ENCODE measurements at regions of chrX and their contacts with region 1.

Region 1: DNA sequence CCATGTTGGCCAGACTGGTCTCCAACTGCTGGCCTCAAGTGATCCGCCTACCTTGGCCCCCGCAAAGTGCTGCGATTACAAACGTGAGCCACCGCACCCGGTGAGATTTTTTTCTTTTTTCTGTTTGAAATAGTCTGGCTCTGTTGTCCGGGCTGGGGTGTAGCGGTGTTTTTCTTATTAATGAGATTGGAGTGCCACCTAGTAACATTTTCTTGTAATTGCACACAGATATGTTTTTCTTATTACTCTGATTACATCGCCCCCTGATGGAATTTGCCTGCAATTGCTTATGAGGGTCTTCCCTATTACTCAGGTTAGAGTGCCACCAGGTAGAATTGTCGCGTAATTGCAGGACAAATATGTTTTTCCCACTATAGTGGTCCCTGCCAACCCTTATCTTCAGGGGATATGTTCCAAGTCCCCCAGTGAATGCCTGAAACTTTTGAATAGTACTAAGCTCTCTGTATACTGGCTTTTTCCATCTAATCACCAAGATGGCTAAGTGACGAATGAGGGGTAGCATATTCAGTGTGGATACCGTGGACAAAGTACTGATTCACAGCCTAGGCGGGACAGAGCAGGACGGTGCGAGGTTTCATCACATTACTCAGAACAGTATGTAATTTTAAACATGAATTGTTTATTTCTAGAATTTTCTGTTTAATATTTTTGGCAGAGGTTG is 8.6 kb upstream of the PDHA1 start:
- DNase-seq: no peak
- ATAC-seq: peak; percentile 65
- H3K4me3 ChIP-seq: no peak overlapping the region
- H3K27ac ChIP-seq: no peak overlapping the region
- H3K4me1 ChIP-seq: no peaks in the 10 kb centered on the region
- H3K27me3 ChIP-seq: no peaks in the 10 kb centered on the region
- CTCF ChIP-seq: peak in 1 of 2 donors; percentile 37

Region 2: DNA sequence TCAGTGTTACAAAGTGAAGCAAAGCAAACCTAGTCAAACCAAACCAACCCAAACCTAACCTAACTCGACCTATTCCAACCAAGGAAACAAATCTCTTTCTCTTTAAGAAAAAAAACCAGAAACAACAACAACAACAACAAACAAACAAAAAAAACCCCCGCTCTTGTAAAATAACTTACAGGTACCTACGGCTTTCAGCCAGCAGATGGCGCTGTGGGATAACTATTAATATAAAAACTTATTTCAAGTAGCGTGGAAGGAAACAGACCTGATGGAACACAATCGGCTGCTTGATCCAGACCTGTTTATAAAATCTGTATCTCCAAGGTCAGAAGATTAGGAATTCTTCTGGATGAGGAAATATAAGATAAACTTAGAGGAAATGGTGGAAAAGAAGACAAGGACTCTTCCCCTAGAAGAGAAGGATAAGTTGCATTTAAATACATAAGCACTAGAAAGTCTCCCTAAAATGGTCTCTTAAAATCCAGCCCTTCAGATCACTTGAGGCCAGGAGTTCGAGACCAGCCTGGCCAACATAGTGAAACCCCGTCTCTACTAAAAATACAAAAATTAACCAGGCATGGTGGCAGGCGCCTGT is 944.0 kb before region 1 on chrX:
- intact Hi-C with region 1: loop called in 1 of 2 experiments (anchors 10 kb)
- DNase-seq: peak in 3 of 4 donors; percentile 52 to 68 (median 59)
- ATAC-seq: peak; percentile 82
- H3K4me3 ChIP-seq: no peak overlapping the region
- H3K27ac ChIP-seq: no peak overlapping the region
- H3K4me1 ChIP-seq: no peaks in the 10 kb centered on the region
- H3K27me3 ChIP-seq: no peaks in the 10 kb centered on the region
- CTCF ChIP-seq: peak; percentile 58 to 83

Region 3: DNA sequence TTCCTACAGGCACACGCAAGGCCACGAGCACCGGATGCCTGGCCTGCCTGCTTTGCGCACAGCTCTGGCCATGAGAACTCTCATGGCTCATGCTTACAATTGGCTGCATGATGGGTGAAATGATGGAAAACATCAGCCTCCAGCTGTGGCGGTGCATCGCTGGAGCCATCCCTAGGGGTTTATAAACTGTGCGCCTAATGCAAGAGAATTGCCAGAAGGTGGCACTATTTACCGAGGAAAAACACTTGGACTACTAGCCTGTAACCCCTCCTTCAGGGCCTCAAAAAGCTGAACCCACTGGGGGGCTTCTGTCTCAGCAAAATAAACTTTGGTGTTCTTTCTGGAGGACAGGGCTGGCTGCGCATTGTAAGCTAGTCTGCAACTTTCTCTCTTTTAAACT is 403.1 kb before region 1 on chrX:
- intact Hi-C with region 1: loop called in 1 of 2 experiments (anchors 10 kb)
- DNase-seq: peak in 1 of 4 donors; percentile 19
- ATAC-seq: no peak
- H3K4me3 ChIP-seq: no peak overlapping the region
- H3K27ac ChIP-seq: no peak overlapping the region
- H3K4me1 ChIP-seq: no peaks in the 10 kb centered on the region
- H3K27me3 ChIP-seq: no peaks in the 10 kb centered on the region
- CTCF ChIP-seq: no peak

Region 4: GRCh38 chrX:19293606-19294325 is 41.3 kb before region 1 on chrX:
- intact Hi-C with region 1: no loop called
- DNase-seq: no peak
- ATAC-seq: no peak
- H3K4me3 ChIP-seq: no peak overlapping the region
- H3K27ac ChIP-seq: no peak overlapping the region
- H3K4me1 ChIP-seq: no peaks in the 10 kb centered on the region
- H3K27me3 ChIP-seq: no peaks in the 10 kb centered on the region
- CTCF ChIP-seq: no peak